HepG2 (cell line): ENCODE measurements at regions of chr6 and their contacts with region 1.

Region 1: DNA sequence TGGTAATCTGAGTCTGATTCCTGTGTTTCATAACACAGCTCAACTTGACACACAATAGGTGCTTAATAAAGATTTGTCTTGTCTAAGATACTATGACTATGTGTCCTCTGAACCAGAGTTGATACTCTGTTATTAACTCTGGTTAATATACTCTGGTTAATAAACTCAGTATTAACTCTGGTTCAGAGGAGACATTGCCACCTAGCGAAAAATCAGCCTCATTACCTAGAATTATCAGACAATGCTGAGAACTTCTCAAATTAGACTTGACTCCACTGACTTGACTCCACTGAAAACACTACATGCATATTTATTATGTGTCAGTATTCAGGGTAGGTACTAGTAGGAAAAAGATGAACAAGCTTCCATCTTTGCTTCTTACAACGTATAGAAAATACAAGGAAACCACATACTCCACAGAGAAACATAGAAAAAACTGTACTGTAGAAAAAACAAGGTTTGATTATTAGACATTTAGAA is 73.9 kb downstream of the AHI1 start:
- DNase-seq: peak; percentile 52
- ATAC-seq: peak; percentile 93
- H3K4me3 ChIP-seq: no peak overlapping the region
- H3K27ac ChIP-seq: no peak overlapping the region
- H3K4me1 ChIP-seq: peaks cover 24% of the 10 kb centered on the region
- H3K27me3 ChIP-seq: no peaks in the 10 kb centered on the region
- CTCF ChIP-seq: peak; percentile 74
- EP300 ChIP-seq: no peak
- POLR2A ChIP-seq: no peak
- RAD21 ChIP-seq: no peak; the same call in 1 of the 2 replicates

Region 2: DNA sequence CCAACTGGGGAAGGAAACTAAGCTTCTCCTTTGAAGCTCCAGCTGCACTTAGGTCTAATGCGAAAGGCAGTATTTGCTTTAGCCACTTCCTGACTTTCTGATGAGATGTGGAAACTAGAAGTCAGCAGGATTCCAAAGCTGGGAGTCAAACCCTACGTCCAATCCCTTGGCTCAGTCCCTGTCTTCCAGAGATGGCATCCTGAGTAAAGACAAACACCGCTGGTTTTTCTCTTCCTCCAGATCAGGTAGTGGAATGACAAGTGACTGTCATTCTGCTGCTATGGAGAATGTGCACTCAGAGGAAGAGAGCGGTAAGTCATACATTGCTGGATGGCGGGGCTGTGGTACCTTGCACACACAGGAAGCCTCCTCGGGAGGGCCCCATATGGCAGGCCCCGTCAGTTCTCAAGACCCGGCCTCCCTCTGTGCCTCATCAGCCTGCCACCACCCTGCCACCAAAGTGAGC is 171.7 kb before region 1 on chr6:
- CTCF ChIA-PET with region 1: no interaction called
- POLR2A ChIA-PET with region 1: no interaction called
- in situ Hi-C with region 1: no loop called
- intact Hi-C with region 1: loop called (anchors 5 kb)
- DNase-seq: peak; percentile 83
- ATAC-seq: peak; percentile 85
- H3K4me3 ChIP-seq: peak overlapping the region in 1 of 3 experiments; percentile 18; a peak in 2 of 6 replicates
- H3K27ac ChIP-seq: peak overlapping the region; percentile 28
- H3K4me1 ChIP-seq: peaks cover 39% of the 10 kb centered on the region
- H3K27me3 ChIP-seq: no peaks in the 10 kb centered on the region; a peak in 1 of 5 replicates
- CTCF ChIP-seq: no peak
- EP300 ChIP-seq: no peak; a peak in 1 of 4 replicates
- POLR2A ChIP-seq: no peak
- RAD21 ChIP-seq: no peak

Region 3: GRCh38 chr6:135627092-135627715 is 203.5 kb after region 1 on chr6:
- CTCF ChIA-PET with region 1: no interaction called
- POLR2A ChIA-PET with region 1: no interaction called
- in situ Hi-C with region 1: no loop called
- intact Hi-C with region 1: no loop called
- DNase-seq: no peak
- ATAC-seq: no peak
- H3K4me3 ChIP-seq: no peak overlapping the region
- H3K27ac ChIP-seq: no peak overlapping the region
- H3K4me1 ChIP-seq: no peaks in the 10 kb centered on the region
- H3K27me3 ChIP-seq: no peaks in the 10 kb centered on the region; a peak in 1 of 5 replicates
- CTCF ChIP-seq: no peak
- EP300 ChIP-seq: no peak
- POLR2A ChIP-seq: no peak
- RAD21 ChIP-seq: no peak